Posterior vena cava (tissue), 2 donors: ENCODE measurements at regions of chr6 and their contacts with region 1.

Region 1: GRCh38 chr6:168837254-168838036 is 396.5 kb downstream of the SMOC2 start:
- DNase-seq: no peak

Region 2: GRCh38 chr6:168403370-168404005 is 434.0 kb before region 1 on chr6:
- intact Hi-C with region 1: loop called in 1 of 2 experiments (anchors 2 kb)
- DNase-seq: peak; percentile 37

Region 3: DNA sequence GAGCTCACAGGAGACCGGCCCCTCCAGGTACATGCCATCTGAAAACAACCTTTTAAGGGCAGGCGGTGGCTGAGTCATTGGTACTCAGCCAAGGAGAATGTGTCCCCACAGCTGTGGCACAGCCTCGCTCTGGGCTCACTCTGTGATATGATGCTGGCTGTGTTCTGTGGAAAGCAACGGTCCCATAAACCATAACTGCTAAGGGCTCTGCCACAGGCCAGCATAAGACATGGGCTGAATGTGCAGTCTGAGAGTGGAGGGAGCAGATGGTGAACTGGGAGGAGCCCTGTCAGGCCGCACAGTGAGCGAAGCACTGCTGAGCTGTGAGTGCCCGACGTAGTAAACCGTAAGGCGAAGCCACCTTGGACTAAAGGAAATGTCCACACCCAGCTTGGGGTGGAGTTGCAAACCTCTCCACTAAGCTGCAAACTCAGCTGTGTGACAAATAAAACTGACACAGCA is 40.4 kb after region 1 on chr6:
- intact Hi-C with region 1: no loop called
- DNase-seq: no peak